ENCODE measurements at regions of chr11 and their contacts with region 1.

Region 1: DNA sequence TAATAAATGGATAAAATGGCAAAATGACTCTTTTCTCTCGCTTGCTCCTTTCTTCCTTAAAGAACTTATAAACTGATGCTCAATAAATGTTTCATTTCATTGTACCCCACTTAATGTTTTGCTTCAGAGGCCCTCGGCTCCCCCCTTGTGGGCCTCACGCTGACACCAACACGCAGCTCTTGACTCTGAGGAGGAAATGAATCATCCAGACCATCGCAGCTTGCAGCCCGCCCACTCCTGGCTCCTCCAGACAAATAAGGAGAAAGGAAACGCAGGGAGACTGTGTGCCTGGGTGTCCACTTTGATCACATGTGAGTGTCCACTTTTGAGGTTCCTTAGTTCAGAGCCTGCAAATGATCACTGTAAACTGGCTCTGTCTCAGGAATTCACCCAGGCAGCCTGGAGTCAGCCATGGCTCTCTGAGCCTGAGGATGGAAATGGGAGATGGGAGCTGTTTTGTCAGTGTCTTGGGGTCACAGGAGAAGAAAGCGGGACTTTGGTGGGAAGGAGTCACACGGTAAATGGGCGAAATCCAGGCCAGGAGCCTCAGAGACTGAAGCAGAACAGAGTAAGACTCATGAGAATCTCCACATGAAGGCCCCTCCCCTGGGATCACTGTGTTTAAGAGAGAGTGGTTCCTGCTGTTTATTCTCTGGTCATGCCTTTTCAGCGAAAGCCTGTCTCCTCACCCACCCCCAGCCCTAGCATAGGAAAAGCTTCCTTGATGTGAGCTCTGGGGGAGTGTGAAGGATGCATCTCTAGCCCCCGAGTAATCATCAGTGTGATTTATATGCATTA is 96.5 kb downstream of the CWC15 start:
- DNase-seq: peak; percentile 60
- H3K4me3 ChIP-seq: no peak overlapping the region
- H3K27ac ChIP-seq: peak overlapping the region; percentile 52 to 80 (median 67)
- H3K4me1 ChIP-seq: peaks cover 5 to 15% (median 12%) of the 10 kb centered on the region in 4 donors
- H3K27me3 ChIP-seq: no peaks in the 10 kb centered on the region
- CTCF ChIP-seq: peak in 2 of 5 experiments; percentile 5 to 14
- EP300 ChIP-seq: no peak
- POLR2A ChIP-seq: no peak

Region 2: GRCh38 chr11:94183886-94184264 is 693.0 kb before region 1 on chr11:
- in situ Hi-C with region 1: no loop called
- intact Hi-C with region 1: no loop called
- DNase-seq: peak; percentile 73
- H3K4me3 ChIP-seq: no peak overlapping the region
- H3K27ac ChIP-seq: peak overlapping the region in 1 of 4 donors; percentile 21
- H3K4me1 ChIP-seq: peaks cover 0 to 20% (median 2%) of the 10 kb centered on the region in 4 donors
- H3K27me3 ChIP-seq: no peaks in the 10 kb centered on the region
- CTCF ChIP-seq: peak; percentile 65 to 85 (median 73)
- EP300 ChIP-seq: no peak
- POLR2A ChIP-seq: no peak

Region 3: GRCh38 chr11:94602430-94603372 is 274.1 kb before region 1 on chr11:
- in situ Hi-C with region 1: no loop called
- intact Hi-C with region 1: no loop called
- DNase-seq: peak; percentile 65
- H3K4me3 ChIP-seq: no peak overlapping the region
- H3K27ac ChIP-seq: peak overlapping the region in 1 of 4 donors; percentile 10
- H3K4me1 ChIP-seq: no peaks in the 10 kb centered on the region
- H3K27me3 ChIP-seq: no peaks in the 10 kb centered on the region
- CTCF ChIP-seq: peak in 3 of 5 experiments; percentile 37 to 45 (median 39)
- EP300 ChIP-seq: no peak
- POLR2A ChIP-seq: no peak

Region 4: DNA sequence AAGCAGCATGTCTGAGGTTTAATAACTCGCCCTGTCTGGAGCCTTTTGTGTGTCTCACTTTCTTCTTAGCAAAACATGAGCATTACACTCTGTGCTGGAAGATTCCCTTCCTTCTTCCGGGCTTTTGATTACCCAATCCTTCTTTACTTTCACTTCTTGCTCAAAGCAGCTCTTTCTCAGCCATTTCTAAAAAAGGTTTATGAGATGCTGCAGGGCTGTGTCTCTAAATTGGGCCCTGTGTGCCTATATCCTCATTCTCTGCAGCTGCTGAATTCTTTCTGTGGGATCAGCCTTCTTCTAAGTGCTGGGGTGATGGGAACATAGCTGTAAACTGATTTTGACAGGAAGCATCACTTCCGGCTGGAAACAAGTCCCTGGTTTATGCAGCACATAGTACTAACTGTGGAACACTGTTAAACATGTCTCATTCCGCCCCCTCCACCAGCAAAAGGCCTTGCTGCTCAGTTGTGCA is 237.9 kb before region 1 on chr11:
- in situ Hi-C with region 1: loop called in 1 of 4 experiments (anchors 25 kb)
- intact Hi-C with region 1: no loop called
- DNase-seq: no peak
- H3K4me3 ChIP-seq: no peak overlapping the region
- H3K27ac ChIP-seq: peak overlapping the region; percentile 11 to 61 (median 46)
- H3K4me1 ChIP-seq: peaks cover 0 to 9% (median 2%) of the 10 kb centered on the region in 4 donors
- H3K27me3 ChIP-seq: no peaks in the 10 kb centered on the region
- CTCF ChIP-seq: no peak
- EP300 ChIP-seq: no peak
- POLR2A ChIP-seq: no peak